ENCODE measurements at regions of chr13 and their contacts with region 1.

Region 1: DNA sequence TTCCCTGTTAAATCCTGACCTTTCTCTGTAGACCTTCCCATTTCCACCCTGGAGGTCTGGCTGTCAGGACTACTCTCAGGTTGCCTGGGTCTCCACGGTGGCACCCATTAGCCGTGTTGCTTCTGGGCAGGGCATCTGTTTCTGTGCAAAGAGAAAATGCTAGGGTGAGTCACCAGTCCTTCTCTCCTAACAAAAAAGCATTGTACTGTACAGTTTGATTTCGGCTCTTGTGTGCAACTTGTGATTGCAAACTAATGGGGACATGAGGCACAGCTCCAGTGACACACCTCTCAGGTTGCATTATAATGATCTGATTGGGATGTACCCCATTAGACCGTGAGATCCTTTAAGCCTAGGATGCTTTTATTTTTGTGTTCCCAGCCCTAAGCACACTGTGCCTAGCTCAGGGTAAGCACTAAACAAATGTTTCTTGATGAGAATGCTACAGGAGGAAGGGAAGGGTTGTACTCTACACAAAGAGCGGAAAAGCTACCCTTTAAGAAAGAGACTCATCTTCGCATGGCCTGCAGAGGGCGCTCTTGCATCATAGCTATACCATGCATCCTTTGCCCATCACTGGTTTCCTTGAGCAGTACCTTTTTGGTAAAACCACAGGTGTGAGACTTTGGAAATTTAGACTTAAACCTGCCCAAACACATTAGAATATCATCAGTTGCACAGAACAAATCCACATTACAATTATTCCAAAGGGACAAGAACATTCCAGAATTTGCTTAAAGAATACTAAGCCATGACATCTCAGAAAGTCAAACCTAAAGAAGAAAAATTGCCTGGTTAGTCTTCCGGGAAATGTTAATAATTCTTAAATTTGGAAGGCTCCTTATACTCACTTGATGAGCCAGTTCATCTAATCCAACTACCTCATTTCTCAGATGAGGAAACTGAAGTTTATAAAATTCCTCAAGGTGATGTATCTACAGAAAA is 20.3 kb upstream of the TRIM13 start:
- DNase-seq: peak; percentile 66
- H3K4me3 ChIP-seq: no peak overlapping the region; a peak in 1 of 4 replicates
- H3K27ac ChIP-seq: peak overlapping the region in 1 of 2 experiments; percentile 12; a peak in 1 of 4 replicates
- H3K4me1 ChIP-seq: peaks cover 4 to 5% of the 10 kb centered on the region in 2 experiments; a peak in 2 of 4 replicates
- H3K27me3 ChIP-seq: no peaks in the 10 kb centered on the region
- CTCF ChIP-seq: peak; percentile 97
- EP300 ChIP-seq: no peak
- RAD21 ChIP-seq: peak; percentile 94

Region 2: DNA sequence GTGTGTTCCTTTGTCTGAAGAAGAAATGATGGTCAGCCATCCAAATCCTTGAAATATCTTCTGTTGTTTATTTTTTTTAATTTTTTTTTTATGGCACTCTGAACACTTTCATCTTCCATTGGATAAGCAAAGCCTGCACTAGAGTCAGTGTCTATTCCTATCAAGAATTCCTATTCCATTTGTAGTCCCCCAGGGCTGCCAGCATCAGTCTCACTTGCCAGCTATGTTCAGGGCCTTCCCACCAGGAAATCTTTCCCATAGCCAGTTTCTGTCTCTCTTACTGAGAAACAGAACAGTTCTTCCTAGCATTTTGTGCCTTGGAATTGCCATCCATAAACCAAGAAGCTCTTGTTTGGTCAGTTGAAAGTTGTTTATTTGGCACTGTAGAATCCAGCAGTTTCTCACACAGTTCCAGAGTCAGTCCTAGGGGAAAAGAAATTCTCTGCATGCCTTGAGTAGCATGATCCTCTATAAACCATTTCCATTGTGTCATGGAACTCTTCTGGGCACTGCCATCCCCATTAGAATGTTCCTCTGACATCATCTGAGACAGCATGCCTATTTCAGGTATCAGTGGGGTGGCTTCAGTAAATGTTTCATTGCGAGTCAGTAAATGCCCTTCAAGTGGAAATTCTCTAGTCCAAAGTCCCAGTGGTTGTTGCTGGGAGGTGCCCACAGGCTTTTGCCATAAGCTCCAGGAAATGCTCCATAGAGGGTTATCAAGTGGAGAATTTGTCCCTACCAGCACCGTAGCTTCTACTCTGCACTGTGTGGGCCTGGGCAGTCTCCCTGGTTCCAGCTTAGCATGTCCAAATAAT is 21.7 kb before region 1 on chr13:
- CTCF ChIA-PET with region 1: interaction called, 17 read pairs
- POLR2A ChIA-PET with region 1: no interaction called
- DNase-seq: no peak
- H3K4me3 ChIP-seq: no peak overlapping the region
- H3K27ac ChIP-seq: no peak overlapping the region
- H3K4me1 ChIP-seq: no peaks in the 10 kb centered on the region
- H3K27me3 ChIP-seq: no peaks in the 10 kb centered on the region
- CTCF ChIP-seq: no peak
- EP300 ChIP-seq: no peak
- RAD21 ChIP-seq: no peak

Region 3: GRCh38 chr13:49996951-49997895 is 20.6 kb after region 1 on chr13 and contains the start of gene TRIM13:
- CTCF ChIA-PET with region 1: interaction called, 27 read pairs
- POLR2A ChIA-PET with region 1: interaction called, 3 read pairs
- DNase-seq: peak; percentile 72
- H3K4me3 ChIP-seq: peak within 1 kb of the TSS; percentile 71 to 94
- H3K27ac ChIP-seq: peak within 1 kb of the TSS; percentile 97 to 98
- H3K4me1 ChIP-seq: peaks cover 19 to 29% of the 10 kb centered on the region in 2 experiments; a peak in 3 of 4 replicates
- H3K27me3 ChIP-seq: no peaks in the 10 kb centered on the region
- CTCF ChIP-seq: peak; percentile 86
- EP300 ChIP-seq: no peak
- RAD21 ChIP-seq: peak; percentile 68
- polyA plus RNA-seq, gene TRIM13: 8.3 and 12.9 TPM in 2 replicates

Region 4: DNA sequence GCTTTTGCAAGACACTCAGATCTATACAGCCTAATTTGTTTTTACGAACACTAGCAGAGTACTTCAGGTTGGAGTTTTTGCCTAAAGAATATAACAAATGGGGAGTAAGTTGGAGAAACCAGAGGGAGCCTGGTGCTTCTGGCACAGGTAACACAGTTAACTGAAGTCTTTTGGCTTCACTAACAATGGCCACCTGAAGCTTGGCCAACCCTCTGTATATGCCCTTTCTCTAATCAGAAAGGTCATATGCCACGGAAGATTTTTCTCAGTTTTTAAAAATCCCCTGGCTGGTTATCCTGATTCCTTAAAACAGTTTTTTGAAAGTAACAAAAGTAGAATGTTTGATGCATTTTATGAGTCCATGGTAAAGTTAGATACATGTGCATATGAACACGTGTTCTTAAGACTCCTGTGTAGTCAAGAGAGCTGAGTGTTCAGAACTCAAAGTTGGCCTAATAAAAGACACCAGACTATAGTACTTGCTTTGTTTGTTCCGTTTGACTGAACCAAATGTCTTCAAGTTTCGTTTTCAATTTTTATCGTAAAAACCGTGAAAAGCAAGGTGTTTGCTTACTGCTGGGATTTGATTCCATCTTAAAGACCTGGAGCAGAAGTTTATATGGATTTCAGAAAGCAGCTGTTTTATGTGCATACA is 176.2 kb after region 1 on chr13:
- CTCF ChIA-PET with region 1: no interaction called
- POLR2A ChIA-PET with region 1: no interaction called
- DNase-seq: no peak
- H3K4me3 ChIP-seq: no peak overlapping the region; a peak in 1 of 4 replicates
- H3K27ac ChIP-seq: no peak overlapping the region
- H3K4me1 ChIP-seq: peaks cover 2 to 7% of the 10 kb centered on the region in 2 experiments; a peak in 3 of 4 replicates
- H3K27me3 ChIP-seq: no peaks in the 10 kb centered on the region
- CTCF ChIP-seq: no peak
- EP300 ChIP-seq: no peak
- RAD21 ChIP-seq: no peak

Region 5: GRCh38 chr13:50244355-50244712 is 267.7 kb after region 1 on chr13:
- CTCF ChIA-PET with region 1: no interaction called
- POLR2A ChIA-PET with region 1: no interaction called
- DNase-seq: no peak
- H3K4me3 ChIP-seq: no peak overlapping the region
- H3K27ac ChIP-seq: no peak overlapping the region
- H3K4me1 ChIP-seq: no peaks in the 10 kb centered on the region
- H3K27me3 ChIP-seq: no peaks in the 10 kb centered on the region; the same call in 1 of the 2 replicates
- CTCF ChIP-seq: no peak
- EP300 ChIP-seq: no peak
- RAD21 ChIP-seq: no peak

Region 6: GRCh38 chr13:50801087-50801931 is 824.7 kb after region 1 on chr13:
- CTCF ChIA-PET with region 1: interaction called, 12 read pairs
- POLR2A ChIA-PET with region 1: no interaction called
- DNase-seq: peak; percentile 53
- H3K4me3 ChIP-seq: no peak overlapping the region
- H3K27ac ChIP-seq: no peak overlapping the region
- H3K4me1 ChIP-seq: peaks cover 0 to 7% of the 10 kb centered on the region in 2 experiments; a peak in 2 of 4 replicates
- H3K27me3 ChIP-seq: no peaks in the 10 kb centered on the region
- CTCF ChIP-seq: peak; percentile 79
- EP300 ChIP-seq: no peak
- RAD21 ChIP-seq: peak; percentile 95

Region 7: GRCh38 chr13:51070005-51070649 is 1093.5 kb after region 1 on chr13:
- CTCF ChIA-PET with region 1: interaction called, 19 read pairs
- POLR2A ChIA-PET with region 1: no interaction called
- DNase-seq: peak; percentile 74
- H3K4me3 ChIP-seq: no peak overlapping the region
- H3K27ac ChIP-seq: no peak overlapping the region
- H3K4me1 ChIP-seq: peaks cover 10 to 14% of the 10 kb centered on the region in 2 experiments; a peak in 2 of 4 replicates
- H3K27me3 ChIP-seq: no peaks in the 10 kb centered on the region; the same call in 1 of the 2 replicates
- CTCF ChIP-seq: peak; percentile 94
- EP300 ChIP-seq: no peak
- RAD21 ChIP-seq: peak; percentile 100

Measured in SK-N-SH (cell line).